A549 (cell line): ENCODE measurements at regions of chr5 and their contacts with region 1.

Region 1: DNA sequence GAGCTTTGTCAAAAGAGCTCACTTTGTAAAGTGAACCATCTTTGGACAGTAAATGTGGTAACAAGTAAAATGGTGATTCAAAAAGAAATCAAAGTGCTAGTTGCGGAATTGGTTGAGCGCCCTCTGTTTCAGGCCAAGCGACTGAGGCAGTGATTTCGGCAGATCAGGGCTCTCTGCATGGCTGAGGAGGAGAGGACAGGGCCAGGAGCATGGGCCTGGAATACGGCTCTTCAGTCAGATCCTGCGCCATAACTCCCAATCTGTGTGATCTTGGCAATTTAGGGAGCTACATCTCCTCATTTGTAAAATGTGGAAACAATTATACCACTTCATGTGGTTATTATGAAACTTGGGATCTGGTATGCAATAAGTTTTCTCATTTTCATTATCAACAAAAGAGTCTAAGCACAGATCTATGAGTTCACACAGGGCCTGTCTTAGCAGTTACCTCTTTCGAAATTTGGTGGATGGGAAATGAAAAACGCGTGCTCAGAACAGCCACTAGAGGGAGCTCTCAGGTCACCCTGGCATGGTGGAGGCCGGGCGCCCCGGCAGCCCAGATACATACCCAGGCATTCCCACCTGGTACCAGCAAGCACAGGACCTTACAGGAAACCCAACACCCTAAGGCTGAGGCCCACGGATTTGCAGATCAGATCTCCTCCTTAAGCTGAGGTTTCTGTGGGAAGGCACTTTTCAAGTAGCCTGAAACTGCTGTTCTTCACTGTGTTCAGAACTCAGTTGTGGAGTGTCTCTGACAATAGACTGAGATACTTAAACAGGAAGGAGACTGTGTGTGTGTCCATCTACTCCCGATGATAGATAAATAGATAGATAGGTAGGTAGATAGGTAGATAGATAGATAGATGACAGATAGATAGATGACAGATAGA is 303.7 kb downstream of the RAB3C start:
- DNase-seq: peak; percentile 77 to 93
- ATAC-seq: peak; percentile 27 to 68
- H3K4me3 ChIP-seq: no peak overlapping the region
- H3K27ac ChIP-seq: peak overlapping the region; percentile 94 to 100
- H3K4me1 ChIP-seq: peaks cover 50% of the 10 kb centered on the region
- CTCF ChIP-seq: peak; percentile 96
- EP300 ChIP-seq: no peak
- POLR2A ChIP-seq: no peak
- RAD21 ChIP-seq: peak; percentile 96 to 97

Region 2: DNA sequence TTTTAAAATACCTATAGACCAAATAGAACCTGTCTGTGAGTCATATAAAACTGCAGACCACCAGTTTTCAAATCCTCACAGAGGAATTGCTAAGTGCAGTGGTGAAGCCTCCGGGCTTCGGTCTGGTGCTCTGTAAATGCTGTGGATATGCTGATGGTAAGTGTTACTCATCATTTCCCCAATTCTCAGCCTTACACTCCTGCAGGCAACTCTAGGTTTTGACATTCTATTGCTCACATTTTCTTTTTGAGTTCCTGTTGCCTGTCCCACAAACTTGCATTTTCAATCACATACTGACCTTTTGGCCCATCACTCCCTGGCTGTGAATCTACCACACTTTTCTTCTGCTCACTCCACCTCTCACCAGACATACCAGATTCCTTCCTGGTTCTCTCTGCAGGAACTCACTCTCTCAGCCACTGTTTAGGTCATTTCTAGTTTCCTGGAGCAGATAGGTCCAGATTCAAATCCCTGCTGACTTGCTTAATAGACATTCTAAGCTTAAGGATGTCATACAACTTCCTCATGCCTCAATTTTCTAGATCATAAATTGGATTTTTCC is 110.8 kb before region 1 on chr5:
- CTCF ChIA-PET with region 1: no interaction called
- POLR2A ChIA-PET with region 1: no interaction called
- DNase-seq: no peak
- ATAC-seq: no peak
- H3K4me3 ChIP-seq: no peak overlapping the region
- H3K27ac ChIP-seq: no peak overlapping the region
- H3K4me1 ChIP-seq: no peaks in the 10 kb centered on the region
- CTCF ChIP-seq: no peak
- EP300 ChIP-seq: no peak
- POLR2A ChIP-seq: no peak
- RAD21 ChIP-seq: no peak

Region 3: DNA sequence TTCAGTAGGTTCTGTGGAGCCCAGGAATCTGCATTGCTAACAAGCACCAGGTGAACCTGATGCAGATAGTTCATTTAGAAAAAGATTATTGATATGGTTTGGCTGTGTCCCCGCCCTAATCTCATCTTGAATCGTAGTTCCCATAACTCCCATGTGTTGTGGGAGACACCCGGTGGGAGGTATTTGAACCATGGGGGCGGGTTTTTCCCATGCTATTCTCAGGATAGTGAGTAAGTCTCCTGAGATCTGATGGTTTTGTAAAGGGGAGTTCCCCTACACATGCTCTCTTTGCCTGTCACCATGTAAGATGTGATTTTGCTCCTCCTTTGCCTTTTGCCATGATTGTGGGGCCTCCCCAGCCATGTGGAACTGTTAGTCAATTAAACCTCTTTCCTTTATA is 91.7 kb before region 1 on chr5:
- CTCF ChIA-PET with region 1: no interaction called
- POLR2A ChIA-PET with region 1: no interaction called
- DNase-seq: no peak
- ATAC-seq: no peak
- H3K4me3 ChIP-seq: no peak overlapping the region
- H3K27ac ChIP-seq: no peak overlapping the region
- H3K4me1 ChIP-seq: no peaks in the 10 kb centered on the region
- CTCF ChIP-seq: no peak
- EP300 ChIP-seq: no peak
- POLR2A ChIP-seq: no peak
- RAD21 ChIP-seq: no peak

Region 4: DNA sequence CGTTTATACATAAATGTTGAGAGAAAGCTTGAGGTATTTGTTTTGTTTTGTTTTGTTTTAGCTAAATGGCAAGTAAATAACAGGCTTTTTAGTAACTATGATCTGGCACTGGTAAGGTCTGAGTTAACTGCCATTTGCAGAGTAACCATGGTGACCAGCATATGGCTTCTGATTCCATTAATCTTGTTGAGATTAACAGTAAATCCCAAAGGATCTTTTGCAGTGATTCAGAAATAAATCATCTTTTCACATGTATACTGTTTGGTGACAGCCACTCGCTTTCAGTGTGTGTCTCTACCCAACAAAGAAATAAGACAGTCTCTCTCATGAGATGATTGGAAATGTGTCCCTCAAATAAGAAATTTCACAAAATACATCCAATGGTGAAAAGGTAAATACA is 68.1 kb before region 1 on chr5:
- CTCF ChIA-PET with region 1: no interaction called
- POLR2A ChIA-PET with region 1: no interaction called
- DNase-seq: no peak
- ATAC-seq: no peak
- H3K4me3 ChIP-seq: no peak overlapping the region
- H3K27ac ChIP-seq: no peak overlapping the region
- H3K4me1 ChIP-seq: no peaks in the 10 kb centered on the region
- CTCF ChIP-seq: no peak
- EP300 ChIP-seq: no peak
- POLR2A ChIP-seq: no peak
- RAD21 ChIP-seq: no peak

Region 5: GRCh38 chr5:58902765-58903164 is 16.2 kb after region 1 on chr5:
- CTCF ChIA-PET with region 1: interaction called, 10 read pairs
- POLR2A ChIA-PET with region 1: no interaction called
- DNase-seq: peak in 1 of 2 experiments; percentile 73
- ATAC-seq: peak; percentile 66 to 80; a peak in 5 of 6 replicates
- H3K4me3 ChIP-seq: no peak overlapping the region
- H3K27ac ChIP-seq: peak overlapping the region; percentile 60 to 71
- H3K4me1 ChIP-seq: peaks cover 30% of the 10 kb centered on the region
- CTCF ChIP-seq: peak; percentile 50
- EP300 ChIP-seq: no peak
- POLR2A ChIP-seq: no peak
- RAD21 ChIP-seq: peak; percentile 68 to 69

Region 6: DNA sequence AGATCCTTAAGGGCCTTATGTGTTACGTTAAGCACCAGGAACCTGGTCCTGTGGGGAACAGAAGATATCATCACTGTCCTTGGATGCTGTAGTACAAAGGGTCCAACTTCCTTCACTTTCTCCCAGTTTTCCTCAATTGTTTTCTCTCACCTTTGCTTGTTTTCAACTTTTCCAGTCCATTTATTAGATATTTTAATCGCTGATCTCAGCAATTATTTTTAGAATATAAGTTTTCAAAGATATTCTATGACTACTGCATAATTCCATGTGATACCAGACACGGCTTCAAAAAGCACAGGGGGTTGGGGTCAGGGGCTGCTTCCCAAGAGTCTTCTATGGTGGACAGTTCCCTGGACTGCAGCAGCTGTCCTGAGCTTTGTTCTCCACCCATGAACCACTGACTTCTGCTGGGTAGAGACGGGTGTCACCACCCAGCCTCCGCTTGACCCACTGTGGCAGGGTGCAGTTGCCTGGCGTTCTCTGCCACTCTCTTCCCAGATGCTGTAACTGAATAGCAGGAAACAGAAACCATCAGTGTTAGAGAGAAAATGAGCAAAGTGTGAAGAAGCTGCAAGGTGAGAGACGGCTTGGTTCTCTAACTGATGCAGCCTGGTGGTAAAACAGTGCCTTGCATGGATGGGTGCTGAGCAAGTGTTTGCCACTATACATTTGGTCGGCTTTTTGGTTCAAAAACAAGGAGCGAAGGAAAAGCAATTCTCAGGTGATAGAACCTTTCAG is 79.3 kb after region 1 on chr5:
- CTCF ChIA-PET with region 1: interaction called, 33 read pairs
- POLR2A ChIA-PET with region 1: interaction called, 16 read pairs
- DNase-seq: no peak
- ATAC-seq: peak; percentile 14 to 21; a peak in 3 of 6 replicates
- H3K4me3 ChIP-seq: no peak overlapping the region
- H3K27ac ChIP-seq: peak overlapping the region; percentile 81 to 85
- H3K4me1 ChIP-seq: peaks cover 87% of the 10 kb centered on the region
- CTCF ChIP-seq: peak; percentile 14; the same call in 1 of the 3 replicates
- EP300 ChIP-seq: no peak
- POLR2A ChIP-seq: no peak
- RAD21 ChIP-seq: no peak

Region 7: DNA sequence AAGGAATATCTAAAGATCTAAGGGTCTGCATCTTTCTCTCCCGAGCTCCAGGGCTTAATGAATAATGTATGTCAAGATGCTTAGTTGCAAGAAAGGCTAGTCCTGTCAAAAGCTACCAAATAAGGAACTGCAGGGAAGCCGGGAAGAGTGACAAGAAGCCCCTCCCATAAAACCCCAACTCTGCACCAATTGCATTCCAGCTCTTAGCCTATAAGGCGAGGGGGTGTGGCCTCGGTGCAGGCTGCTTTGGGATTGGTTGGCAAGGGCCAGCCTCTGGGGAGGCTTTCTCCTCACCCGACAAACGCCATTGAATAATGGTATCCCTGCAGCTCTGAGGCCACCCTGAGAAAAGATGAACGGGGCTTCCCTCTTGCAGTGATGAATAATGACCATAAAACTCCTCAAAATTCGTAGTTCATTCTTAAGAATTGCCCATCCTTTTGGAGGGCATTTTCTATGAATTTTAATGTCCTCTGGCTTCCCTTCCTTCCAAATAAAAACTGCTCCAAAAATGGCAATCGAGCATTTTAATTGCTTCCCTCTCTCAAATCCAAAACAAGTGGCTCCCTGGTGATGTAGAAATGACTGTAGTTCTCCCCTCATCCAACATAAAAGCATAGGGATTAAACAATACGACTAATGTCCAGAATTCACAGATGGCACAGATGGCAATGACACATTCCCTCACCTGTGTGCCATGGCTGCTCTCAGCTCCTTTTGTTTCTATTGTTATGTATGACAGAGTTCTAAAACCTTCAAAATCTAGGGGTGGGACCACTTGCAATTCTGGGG is 113.4 kb after region 1 on chr5:
- CTCF ChIA-PET with region 1: interaction called, 17 read pairs
- POLR2A ChIA-PET with region 1: interaction called, 16 read pairs
- DNase-seq: peak; percentile 75 to 95
- ATAC-seq: peak; percentile 83 to 89
- H3K4me3 ChIP-seq: peak overlapping the region; percentile 28; the same call in 1 of the 3 replicates
- H3K27ac ChIP-seq: peak overlapping the region; percentile 31 to 77; a peak in 4 of 6 replicates
- H3K4me1 ChIP-seq: peaks cover 91% of the 10 kb centered on the region
- CTCF ChIP-seq: no peak
- EP300 ChIP-seq: no peak
- POLR2A ChIP-seq: no peak
- RAD21 ChIP-seq: no peak

Region 8: DNA sequence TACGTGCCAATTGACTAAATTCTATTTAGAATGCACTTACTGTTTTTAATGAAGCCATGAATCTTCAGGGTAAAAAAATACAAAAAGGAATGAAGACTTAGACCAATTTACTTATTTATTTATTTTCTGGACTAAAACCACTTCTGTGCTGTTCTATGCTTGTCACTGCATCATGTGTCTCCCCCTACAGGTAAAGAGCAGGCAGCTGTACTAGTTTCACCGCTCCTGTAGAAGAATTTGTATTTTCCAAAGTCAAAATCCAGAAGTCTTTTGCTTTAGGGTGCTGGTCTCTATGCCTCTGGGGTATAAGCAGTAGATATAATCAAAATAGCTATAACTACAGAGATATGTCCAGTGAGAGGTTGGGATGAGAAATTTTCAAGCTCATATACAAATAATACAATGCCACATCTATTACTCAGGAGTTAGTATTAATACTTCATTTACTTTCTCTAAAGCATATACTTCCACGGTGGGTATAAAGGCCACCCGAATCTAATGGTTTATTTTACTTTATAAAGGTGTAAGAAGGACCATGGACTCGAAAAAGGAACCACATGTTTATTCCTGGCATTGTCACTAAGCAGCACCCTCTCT is 287.8 kb after region 1 on chr5:
- CTCF ChIA-PET with region 1: interaction called, 32 read pairs
- POLR2A ChIA-PET with region 1: interaction called, 3 read pairs
- DNase-seq: peak; percentile 38 to 88
- ATAC-seq: peak; percentile 82 to 86
- H3K4me3 ChIP-seq: no peak overlapping the region
- H3K27ac ChIP-seq: peak overlapping the region; percentile 75 to 83
- H3K4me1 ChIP-seq: peaks cover 76% of the 10 kb centered on the region
- CTCF ChIP-seq: peak; percentile 90
- EP300 ChIP-seq: no peak
- POLR2A ChIP-seq: no peak
- RAD21 ChIP-seq: peak; percentile 88 to 91